ENCODE measurements at regions of chr1 and their contacts with region 1.

Region 1: DNA sequence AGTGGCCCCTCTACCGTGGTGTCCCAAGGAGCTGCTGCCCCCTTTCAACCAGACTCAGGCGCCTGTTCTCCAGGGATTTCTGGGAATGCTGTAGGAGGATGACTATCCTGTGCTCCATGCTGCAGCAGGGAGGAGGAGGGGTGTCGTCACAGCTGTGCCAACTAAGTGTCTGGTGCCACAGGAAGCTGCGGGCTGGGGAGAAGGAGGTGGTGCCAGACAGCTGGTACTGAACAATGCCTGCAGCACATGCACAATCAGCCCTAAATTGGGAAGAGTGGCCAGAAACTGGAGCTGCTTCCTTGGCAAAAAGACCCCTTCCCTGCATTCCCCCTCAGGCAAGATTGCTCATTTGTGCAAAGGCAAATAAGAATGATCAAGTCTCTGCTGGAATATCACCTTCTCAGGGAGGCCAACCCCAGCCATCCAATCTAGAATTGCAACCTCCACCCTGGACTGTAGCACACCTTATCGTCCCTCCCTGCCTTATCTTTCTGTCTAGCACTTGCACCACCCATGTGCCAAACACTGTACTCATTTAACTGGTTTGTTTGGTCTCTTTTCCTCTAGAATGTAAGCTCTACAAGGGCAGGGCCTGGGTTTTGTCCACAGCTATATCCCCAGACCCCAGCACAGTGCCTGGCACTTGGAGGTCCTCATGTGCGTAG is 33.3 kb downstream of the LAMB3 start:
- DNase-seq: no peak
- H3K4me3 ChIP-seq: no peak overlapping the region
- H3K27ac ChIP-seq: no peak overlapping the region
- H3K4me1 ChIP-seq: no peaks in the 10 kb centered on the region; a peak in 2 of 7 replicates
- H3K27me3 ChIP-seq: no peaks in the 10 kb centered on the region
- CTCF ChIP-seq: no peak
- EP300 ChIP-seq: no peak
- POLR2A ChIP-seq: no peak
- RAD21 ChIP-seq: no peak

Region 2: GRCh38 chr1:209549443-209550205 is 69.3 kb before region 1 on chr1:
- CTCF ChIA-PET with region 1: interaction called, 12 read pairs
- POLR2A ChIA-PET with region 1: no interaction called
- DNase-seq: no peak
- H3K4me3 ChIP-seq: no peak overlapping the region
- H3K27ac ChIP-seq: no peak overlapping the region
- H3K4me1 ChIP-seq: peaks cover 2 to 21% (median 12%) of the 10 kb centered on the region in 4 experiments; a peak in 5 of 7 replicates
- H3K27me3 ChIP-seq: peaks cover 0 to 5% (median under 1%) of the 10 kb centered on the region in 4 experiments; a peak in 3 of 7 replicates
- CTCF ChIP-seq: peak; percentile 52 to 65 (median 61)
- EP300 ChIP-seq: no peak
- POLR2A ChIP-seq: no peak
- RAD21 ChIP-seq: peak in 1 of 2 experiments; percentile 30; a peak in 1 of 4 replicates

Region 3: GRCh38 chr1:209601809-209602657 is 16.9 kb before region 1 on chr1:
- CTCF ChIA-PET with region 1: interaction called, 636 read pairs
- POLR2A ChIA-PET with region 1: interaction called, 3 read pairs
- DNase-seq: no peak
- H3K4me3 ChIP-seq: no peak overlapping the region
- H3K27ac ChIP-seq: no peak overlapping the region
- H3K4me1 ChIP-seq: no peaks in the 10 kb centered on the region
- H3K27me3 ChIP-seq: no peaks in the 10 kb centered on the region
- CTCF ChIP-seq: peak; percentile 75 to 86 (median 84)
- EP300 ChIP-seq: no peak
- POLR2A ChIP-seq: no peak
- RAD21 ChIP-seq: peak; percentile 83 to 84

Region 4: GRCh38 chr1:209607102-209607794 is 11.6 kb before region 1 on chr1:
- CTCF ChIA-PET with region 1: interaction called, 365 read pairs
- POLR2A ChIA-PET with region 1: interaction called, 3 read pairs
- DNase-seq: no peak
- H3K4me3 ChIP-seq: no peak overlapping the region
- H3K27ac ChIP-seq: no peak overlapping the region
- H3K4me1 ChIP-seq: no peaks in the 10 kb centered on the region
- H3K27me3 ChIP-seq: no peaks in the 10 kb centered on the region
- CTCF ChIP-seq: no peak
- EP300 ChIP-seq: no peak
- POLR2A ChIP-seq: no peak
- RAD21 ChIP-seq: no peak

Region 5: GRCh38 chr1:209667708-209668107 is 48.8 kb after region 1 on chr1:
- CTCF ChIA-PET with region 1: no interaction called
- POLR2A ChIA-PET with region 1: no interaction called
- DNase-seq: no peak
- H3K4me3 ChIP-seq: no peak overlapping the region
- H3K27ac ChIP-seq: no peak overlapping the region
- H3K4me1 ChIP-seq: no peaks in the 10 kb centered on the region
- H3K27me3 ChIP-seq: no peaks in the 10 kb centered on the region
- CTCF ChIP-seq: no peak
- EP300 ChIP-seq: no peak
- POLR2A ChIP-seq: no peak
- RAD21 ChIP-seq: no peak

Measured in H1 (cell line).